HCT116 (cell line): ENCODE measurements at regions of chr5 and their contacts with region 1.

Region 1: GRCh38 chr5:96079075-96079474 is 117.4 kb upstream of the ELL2 start:
- DNase-seq: peak; percentile 83
- ATAC-seq: peak; percentile 74
- H3K4me3 ChIP-seq: peak overlapping the region in 1 of 2 experiments; percentile 27; a peak in 2 of 4 replicates
- H3K27ac ChIP-seq: no peak overlapping the region
- H3K4me1 ChIP-seq: peaks cover 0 to 39% of the 10 kb centered on the region in 2 experiments; a peak in 2 of 4 replicates
- H3K27me3 ChIP-seq: no peaks in the 10 kb centered on the region
- CTCF ChIP-seq: no peak
- POLR2A ChIP-seq: no peak
- RAD21 ChIP-seq: no peak

Region 2: GRCh38 chr5:96067894-96068614 is 11.0 kb before region 1 on chr5:
- CTCF ChIA-PET with region 1: no interaction called
- POLR2A ChIA-PET with region 1: interaction called, 26 read pairs
- RAD21 ChIA-PET with region 1: no interaction called
- intact Hi-C with region 1: no loop called
- DNase-seq: peak; percentile 77
- ATAC-seq: peak; percentile 89
- H3K4me3 ChIP-seq: peak overlapping the region in 1 of 2 experiments; percentile 29; a peak in 2 of 4 replicates
- H3K27ac ChIP-seq: peak overlapping the region; percentile 2; the same call in 1 of the 2 replicates
- H3K4me1 ChIP-seq: peaks cover 8 to 27% of the 10 kb centered on the region in 2 experiments
- H3K27me3 ChIP-seq: no peaks in the 10 kb centered on the region
- CTCF ChIP-seq: no peak
- POLR2A ChIP-seq: peak; percentile 97
- RAD21 ChIP-seq: no peak; the same call in 1 of the 2 replicates

Region 3: GRCh38 chr5:96094904-96095303 is 15.8 kb after region 1 on chr5:
- CTCF ChIA-PET with region 1: no interaction called
- POLR2A ChIA-PET with region 1: interaction called, 11 read pairs
- RAD21 ChIA-PET with region 1: no interaction called
- intact Hi-C with region 1: no loop called
- DNase-seq: no peak
- ATAC-seq: no peak
- H3K4me3 ChIP-seq: no peak overlapping the region
- H3K27ac ChIP-seq: no peak overlapping the region
- H3K4me1 ChIP-seq: peaks cover 5 to 22% of the 10 kb centered on the region in 2 experiments; a peak in 3 of 4 replicates
- H3K27me3 ChIP-seq: no peaks in the 10 kb centered on the region
- CTCF ChIP-seq: no peak
- POLR2A ChIP-seq: no peak
- RAD21 ChIP-seq: no peak

Region 4: DNA sequence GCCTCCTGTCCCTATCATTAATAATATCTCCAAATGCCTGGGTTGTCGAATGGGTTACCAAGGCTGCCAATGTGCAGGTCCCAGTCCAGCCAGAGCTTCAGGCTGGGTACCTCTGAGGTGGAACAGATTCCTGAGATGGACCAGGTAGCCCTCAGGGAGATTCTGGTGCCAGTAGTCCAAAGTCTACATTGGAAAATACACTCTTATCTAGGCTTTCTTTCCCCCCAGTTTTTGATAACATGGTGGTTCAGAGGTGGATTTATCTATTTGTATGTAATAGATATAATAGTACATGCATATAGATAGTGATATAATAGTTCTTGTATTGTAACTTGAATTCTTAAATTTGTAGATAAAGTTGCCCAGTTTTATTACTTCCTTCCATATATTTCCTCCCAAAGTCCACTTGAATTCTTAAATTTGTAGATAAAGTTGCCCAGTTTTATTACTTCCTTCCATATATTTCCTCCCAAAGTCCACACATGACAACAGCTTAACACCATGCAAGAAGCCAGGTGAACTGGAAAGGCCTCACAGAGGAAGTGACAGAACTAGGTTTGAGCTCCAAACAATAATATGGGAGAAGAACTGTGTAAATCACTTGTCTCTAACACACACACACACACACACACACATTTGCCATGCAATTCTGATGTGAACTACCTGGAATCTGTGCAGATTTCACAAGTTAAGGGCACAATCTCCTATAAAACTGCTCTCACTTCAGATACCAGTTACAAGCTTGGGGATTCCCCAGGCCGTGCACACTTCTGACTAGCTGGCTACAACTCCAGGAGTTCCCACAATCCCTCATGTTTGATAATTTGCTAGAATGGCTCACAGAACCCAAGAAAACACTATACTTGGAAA is 759.4 kb after region 1 on chr5:
- CTCF ChIA-PET with region 1: no interaction called
- POLR2A ChIA-PET with region 1: no interaction called
- RAD21 ChIA-PET with region 1: no interaction called
- intact Hi-C with region 1: no loop called
- DNase-seq: no peak
- ATAC-seq: no peak
- H3K4me3 ChIP-seq: no peak overlapping the region
- H3K27ac ChIP-seq: no peak overlapping the region
- H3K4me1 ChIP-seq: no peaks in the 10 kb centered on the region
- H3K27me3 ChIP-seq: no peaks in the 10 kb centered on the region
- CTCF ChIP-seq: no peak
- POLR2A ChIP-seq: no peak
- RAD21 ChIP-seq: no peak